HAP-1 (cell line): ENCODE measurements at regions of chr1 and their contacts with region 1.

Region 1: DNA sequence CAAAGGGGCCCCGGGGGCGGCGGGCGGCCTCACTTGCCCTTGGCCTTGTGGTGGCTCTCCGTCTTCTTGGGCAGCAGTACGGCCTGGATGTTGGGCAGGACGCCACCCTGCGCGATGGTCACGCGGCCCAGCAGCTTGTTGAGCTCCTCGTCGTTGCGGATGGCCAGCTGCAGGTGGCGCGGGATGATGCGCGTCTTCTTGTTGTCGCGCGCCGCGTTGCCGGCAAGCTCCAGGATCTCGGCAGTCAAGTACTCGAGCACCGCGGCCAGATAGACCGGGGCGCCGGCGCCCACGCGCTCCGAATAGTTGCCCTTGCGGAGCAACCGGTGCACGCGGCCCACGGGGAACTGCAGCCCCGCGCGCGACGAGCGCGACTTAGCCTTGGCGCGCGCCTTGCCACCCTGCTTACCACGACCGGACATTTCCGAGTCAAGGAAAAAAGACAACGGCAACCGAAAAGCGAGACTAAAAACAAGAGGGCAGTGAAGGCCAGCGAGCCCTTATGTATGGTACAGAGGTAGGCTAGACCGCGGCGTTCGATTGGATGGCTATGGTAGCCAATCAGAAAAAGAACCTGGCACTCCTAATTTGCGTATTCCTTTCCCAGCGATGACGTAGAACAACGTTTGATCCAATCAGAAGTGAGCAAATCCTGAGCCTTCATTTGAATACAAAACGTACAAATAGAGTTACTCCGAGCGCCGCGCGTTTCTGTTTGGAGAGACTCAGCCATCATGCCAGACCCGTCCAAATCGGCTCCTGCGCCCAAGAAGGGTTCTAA is 29.6 kb upstream of the RNF187 start:
- DNase-seq: peak; percentile 91 to 97
- H3K4me3 ChIP-seq: peak overlapping the region; percentile 81
- H3K4me1 ChIP-seq: peaks cover 14% of the 10 kb centered on the region
- H3K27me3 ChIP-seq: no peaks in the 10 kb centered on the region

Region 2: DNA sequence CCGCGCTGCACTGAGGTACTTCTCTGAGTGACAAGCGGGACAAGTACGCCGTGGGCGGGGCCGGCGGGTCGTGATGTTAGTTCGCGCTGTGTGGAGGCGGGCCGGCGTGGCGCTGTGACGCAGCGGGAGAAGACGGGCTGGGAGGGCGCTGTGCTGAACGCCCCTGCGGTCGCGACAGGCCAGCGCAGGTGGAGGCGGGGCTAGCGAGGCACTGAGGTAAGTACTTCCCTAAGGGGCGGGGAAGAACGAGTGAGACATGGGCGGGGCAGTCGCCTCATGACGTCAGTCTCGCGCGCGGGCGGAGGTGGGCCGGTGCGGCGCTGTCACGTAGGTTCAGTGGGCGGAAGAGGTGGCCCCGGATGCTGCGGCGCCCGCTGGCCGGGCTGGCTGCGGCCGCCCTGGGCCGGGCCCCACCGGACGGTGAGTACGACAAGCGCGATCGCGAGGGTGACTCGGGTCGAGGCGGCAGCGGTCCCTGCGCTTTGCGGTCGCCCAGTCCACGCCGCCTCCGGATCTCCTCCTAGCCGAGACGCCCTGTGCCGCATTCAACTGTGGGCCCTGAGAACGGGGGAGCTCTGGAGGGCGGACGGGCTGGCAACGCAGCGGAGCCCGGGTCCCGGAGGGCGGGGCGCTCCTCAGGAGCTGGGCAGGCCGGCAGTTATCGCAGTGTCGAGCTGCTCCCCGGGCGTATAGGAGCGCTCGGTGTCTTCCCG is 317.5 kb before region 1 on chr1 and contains the start of gene GUK1:
- in situ Hi-C with region 1: loop called (anchors 10 kb)
- DNase-seq: peak; percentile 99 to 100
- H3K4me3 ChIP-seq: peak within 1 kb of the TSS; percentile 98
- H3K4me1 ChIP-seq: peaks cover 8% of the 10 kb centered on the region
- H3K27me3 ChIP-seq: peaks cover 8% of the 10 kb centered on the region; the same call in 1 of the 2 replicates